ENCODE measurements at regions of chr4 and their contacts with region 1.

Region 1: DNA sequence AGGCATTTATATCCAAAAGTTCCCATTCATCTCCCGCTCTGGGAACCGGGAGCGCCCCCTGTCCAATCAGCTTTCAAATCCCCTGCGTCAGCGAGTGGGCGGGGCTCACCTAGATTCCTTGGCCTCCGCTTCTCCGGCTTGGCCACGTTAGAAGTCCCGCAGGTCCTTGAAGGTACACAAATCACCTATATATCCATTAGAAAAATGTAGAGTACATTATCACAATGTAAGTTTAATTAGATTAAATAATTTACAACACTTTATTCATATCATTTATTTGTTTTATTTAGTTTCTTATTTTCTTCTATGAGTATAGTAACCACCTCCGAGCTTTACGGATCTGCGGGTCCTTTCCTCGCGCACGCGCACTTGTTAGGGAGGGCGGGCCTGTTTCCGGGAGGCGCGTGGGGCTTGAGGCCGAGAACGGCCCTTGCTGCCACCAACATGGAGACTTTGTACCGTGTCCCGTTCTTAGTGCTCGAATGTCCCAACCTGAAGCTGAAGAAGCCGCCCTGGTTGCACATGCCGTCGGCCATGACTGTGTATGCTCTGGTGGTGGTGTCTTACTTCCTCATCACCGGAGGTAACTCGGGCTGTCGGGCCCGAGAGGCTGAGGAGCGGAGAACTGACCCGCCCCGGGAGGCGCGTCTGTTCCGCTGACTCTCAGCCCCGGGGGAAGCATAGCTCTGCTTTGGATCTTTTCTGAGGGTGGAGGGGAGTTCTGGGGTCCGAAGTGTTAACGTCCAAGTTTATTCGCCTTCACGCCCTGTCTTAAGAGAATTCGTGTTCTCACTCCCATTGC is at the start of gene OSTC:
- DNase-seq: peak; percentile 98
- H3K4me3 Mint-ChIP-seq: peak within 1 kb of the TSS; percentile 84
- H3K27ac Mint-ChIP-seq: peak within 1 kb of the TSS; percentile 80
- H3K4me1 Mint-ChIP-seq: peaks cover 23% of the 10 kb centered on the region
- H3K27me3 Mint-ChIP-seq: no peaks in the 10 kb centered on the region
- CTCF ChIP-seq: peak; percentile 11
- total RNA-seq, gene OSTC: 175 and 214 TPM in 2 replicates

Region 2: GRCh38 chr4:108590776-108591175 is 59.6 kb before region 1 on chr4:
- CTCF ChIA-PET with region 1: no interaction called
- POLR2A ChIA-PET with region 1: no interaction called
- intact Hi-C with region 1: no loop called
- DNase-seq: peak; percentile 12
- H3K4me3 Mint-ChIP-seq: no peak overlapping the region
- H3K27ac Mint-ChIP-seq: peak overlapping the region; percentile 93
- H3K4me1 Mint-ChIP-seq: peaks cover 24% of the 10 kb centered on the region
- H3K27me3 Mint-ChIP-seq: no peaks in the 10 kb centered on the region
- CTCF ChIP-seq: no peak

Region 3: DNA sequence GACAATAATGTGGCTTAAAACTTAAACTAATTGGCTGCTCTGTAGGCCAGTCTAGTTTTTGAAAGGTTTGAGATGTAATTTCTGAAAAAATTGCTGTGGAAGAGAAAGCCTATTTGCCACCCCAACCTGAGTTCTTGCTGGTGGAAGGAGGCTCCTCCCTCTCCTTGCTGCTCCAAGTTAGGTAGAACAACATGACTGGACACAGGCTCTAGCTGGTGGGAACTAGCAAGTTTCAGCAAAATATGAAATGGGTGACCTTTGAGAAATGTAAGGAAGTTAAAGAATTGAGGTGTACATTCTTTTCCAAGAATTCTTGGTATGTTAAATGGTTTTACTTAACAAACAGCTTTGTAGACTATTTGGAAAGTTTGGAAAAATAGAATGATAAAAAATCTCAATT is 22.0 kb before region 1 on chr4:
- CTCF ChIA-PET with region 1: interaction called, 4 read pairs
- POLR2A ChIA-PET with region 1: interaction called, 44 read pairs
- intact Hi-C with region 1: no loop called
- DNase-seq: no peak
- H3K4me3 Mint-ChIP-seq: no peak overlapping the region
- H3K27ac Mint-ChIP-seq: no peak overlapping the region
- H3K4me1 Mint-ChIP-seq: peaks cover 11% of the 10 kb centered on the region
- H3K27me3 Mint-ChIP-seq: no peaks in the 10 kb centered on the region
- CTCF ChIP-seq: no peak

Region 4: DNA sequence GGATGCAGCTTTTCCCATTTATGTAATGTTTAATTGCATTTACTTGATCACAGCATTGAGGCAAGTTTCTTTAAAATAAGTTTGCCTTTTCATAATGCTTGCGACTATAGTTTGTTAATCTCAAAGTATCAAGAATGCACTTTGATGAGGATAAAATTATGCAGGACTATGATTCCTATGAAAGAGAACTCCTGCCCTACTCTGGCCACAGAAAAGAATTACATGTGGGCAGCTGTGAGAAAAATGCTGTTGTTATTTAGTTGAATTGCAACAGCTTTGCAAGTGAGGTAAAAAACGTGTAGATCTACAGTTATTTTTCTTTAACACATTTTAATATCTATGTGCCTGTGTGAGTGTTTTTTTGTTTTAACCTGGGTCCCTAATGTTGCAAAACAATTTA is 12.6 kb before region 1 on chr4:
- CTCF ChIA-PET with region 1: interaction called, 7 read pairs
- POLR2A ChIA-PET with region 1: interaction called, 60 read pairs
- intact Hi-C with region 1: no loop called
- DNase-seq: no peak
- H3K4me3 Mint-ChIP-seq: no peak overlapping the region
- H3K27ac Mint-ChIP-seq: no peak overlapping the region
- H3K4me1 Mint-ChIP-seq: peaks cover 28% of the 10 kb centered on the region
- H3K27me3 Mint-ChIP-seq: no peaks in the 10 kb centered on the region
- CTCF ChIP-seq: peak; percentile 24

Region 5: GRCh38 chr4:108662629-108663028 is 12.2 kb after region 1 on chr4:
- CTCF ChIA-PET with region 1: no interaction called
- POLR2A ChIA-PET with region 1: interaction called, 21 read pairs
- intact Hi-C with region 1: no loop called
- DNase-seq: no peak
- H3K4me3 Mint-ChIP-seq: no peak overlapping the region
- H3K27ac Mint-ChIP-seq: no peak overlapping the region
- H3K4me1 Mint-ChIP-seq: no peaks in the 10 kb centered on the region
- H3K27me3 Mint-ChIP-seq: no peaks in the 10 kb centered on the region
- CTCF ChIP-seq: no peak

Measured in MCF 10A (cell line).